Mammary epithelial cell (primary cell): ENCODE measurements at regions of chr1 and their contacts with region 1.

Region 1: GRCh38 chr1:62263006-62263813 is 56.0 kb downstream of the KANK4 start:
- DNase-seq: no peak
- H3K4me3 ChIP-seq: no peak overlapping the region
- H3K27ac ChIP-seq: no peak overlapping the region
- H3K4me1 ChIP-seq: no peaks in the 10 kb centered on the region
- H3K27me3 ChIP-seq: no peaks in the 10 kb centered on the region
- CTCF ChIP-seq: no peak

Region 2: DNA sequence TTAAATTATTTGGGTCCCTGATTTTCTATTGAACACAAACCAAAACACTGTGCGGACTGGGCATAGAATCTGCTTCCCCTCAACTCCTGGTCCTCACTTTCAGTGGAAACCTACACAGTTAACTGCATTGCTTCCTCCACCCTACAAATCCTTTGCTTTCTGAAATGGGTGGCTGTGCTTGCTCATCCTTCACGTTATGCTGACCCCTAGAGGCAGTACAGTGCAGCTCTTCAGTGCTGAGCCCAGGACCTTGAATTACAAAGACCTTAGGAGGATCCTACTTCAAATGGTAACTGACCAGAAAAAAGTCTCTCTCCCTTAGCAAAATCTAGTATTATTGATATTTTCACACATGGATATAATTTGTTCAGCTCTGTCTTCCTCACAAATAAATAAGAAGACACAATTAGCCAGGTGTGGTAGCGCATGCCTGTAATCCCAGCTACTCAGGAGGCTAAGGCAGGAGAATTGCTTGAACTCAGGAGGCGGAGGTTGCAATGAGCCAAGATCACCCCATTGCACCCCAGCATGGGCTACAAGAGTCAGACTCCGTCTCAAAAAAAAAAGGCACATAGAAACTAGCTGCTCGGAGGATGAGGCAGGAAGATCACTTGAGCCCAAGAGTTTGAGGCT is 132.0 kb before region 1 on chr1:
- CTCF ChIA-PET with region 1: no interaction called
- dilution Hi-C with region 1: no loop called
- in situ Hi-C with region 1: no loop called
- intact Hi-C with region 1: no loop called
- DNase-seq: peak; percentile 25
- H3K4me3 ChIP-seq: no peak overlapping the region
- H3K27ac ChIP-seq: no peak overlapping the region
- H3K4me1 ChIP-seq: no peaks in the 10 kb centered on the region
- H3K27me3 ChIP-seq: no peaks in the 10 kb centered on the region
- CTCF ChIP-seq: peak; percentile 93 to 97

Region 3: DNA sequence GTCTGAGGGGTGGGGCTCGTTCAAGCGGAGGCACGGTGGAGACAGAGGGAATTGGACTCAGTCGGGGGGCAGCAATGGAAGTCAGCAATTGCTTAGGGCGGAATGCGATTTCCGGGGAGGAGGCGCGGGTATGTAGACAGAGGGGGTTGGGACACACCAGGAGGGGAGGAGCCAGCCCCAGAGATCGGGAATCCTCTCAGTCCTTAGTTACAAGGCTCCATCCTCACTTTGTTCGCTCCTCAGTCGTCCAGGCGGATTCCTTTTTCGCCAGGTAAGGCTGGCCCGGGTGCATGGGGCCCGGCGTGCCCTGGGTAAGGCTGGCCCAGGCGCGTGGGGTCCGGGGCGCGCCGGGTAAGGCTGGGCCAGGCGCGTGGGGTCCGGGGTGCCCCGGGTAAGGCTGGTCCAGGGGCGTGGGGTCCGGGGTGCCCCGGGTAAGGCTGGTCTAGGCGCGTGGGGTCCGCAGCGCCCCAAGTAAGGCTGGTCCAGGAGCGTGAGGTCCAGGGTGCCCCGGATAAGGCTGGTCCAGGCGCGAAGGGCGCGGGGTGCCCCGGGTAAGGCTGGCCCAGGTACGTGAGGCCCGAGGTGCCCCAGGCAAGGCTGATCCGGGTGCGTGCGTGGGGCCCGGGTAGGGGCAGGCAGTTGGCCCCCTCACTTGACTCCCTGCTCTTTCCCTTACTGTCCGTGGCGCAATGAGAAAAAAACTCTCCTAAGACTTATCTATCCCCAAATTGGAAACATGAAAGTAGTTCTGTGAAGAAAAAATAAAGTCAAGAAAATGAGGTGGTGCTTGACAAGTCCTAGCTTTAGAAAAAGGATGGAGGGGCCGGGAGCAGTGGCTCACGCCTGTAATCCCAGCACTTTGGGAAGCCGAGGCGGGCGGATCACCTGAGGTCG is 68.3 kb before region 1 on chr1 and contains the start of gene L1TD1:
- CTCF ChIA-PET with region 1: no interaction called
- dilution Hi-C with region 1: loop called (anchors 5 kb)
- in situ Hi-C with region 1: no loop called
- intact Hi-C with region 1: no loop called
- DNase-seq: no peak
- H3K4me3 ChIP-seq: peak within 1 kb of the TSS in 2 of 3 experiments; percentile 11 to 36
- H3K27ac ChIP-seq: no peak within 1 kb of the TSS
- H3K4me1 ChIP-seq: peaks cover 5% of the 10 kb centered on the region
- H3K27me3 ChIP-seq: no peaks in the 10 kb centered on the region
- CTCF ChIP-seq: no peak
- total RNA-seq, gene L1TD1: 0.07 to 18.3 TPM